ENCODE measurements at regions of chr16 and their contacts with region 1.

Region 1: GRCh38 chr16:9102379-9102778 is 10.9 kb downstream of the HAPSTR1 start:
- DNase-seq: peak; percentile 76
- H3K4me3 ChIP-seq: no peak overlapping the region
- H3K27ac ChIP-seq: no peak overlapping the region
- H3K4me1 ChIP-seq: peaks cover 38% of the 10 kb centered on the region
- H3K27me3 ChIP-seq: no peaks in the 10 kb centered on the region
- CTCF ChIP-seq: no peak

Region 2: GRCh38 chr16:9047686-9048301 is 54.6 kb before region 1 on chr16:
- CTCF ChIA-PET with region 1: no interaction called
- dilution Hi-C with region 1: loop called (anchors 5 kb)
- in situ Hi-C with region 1: no loop called
- intact Hi-C with region 1: no loop called
- DNase-seq: peak; percentile 95
- H3K4me3 ChIP-seq: no peak overlapping the region
- H3K27ac ChIP-seq: peak overlapping the region; percentile 63
- H3K4me1 ChIP-seq: peaks cover 19% of the 10 kb centered on the region
- H3K27me3 ChIP-seq: no peaks in the 10 kb centered on the region
- CTCF ChIP-seq: no peak

Region 3: DNA sequence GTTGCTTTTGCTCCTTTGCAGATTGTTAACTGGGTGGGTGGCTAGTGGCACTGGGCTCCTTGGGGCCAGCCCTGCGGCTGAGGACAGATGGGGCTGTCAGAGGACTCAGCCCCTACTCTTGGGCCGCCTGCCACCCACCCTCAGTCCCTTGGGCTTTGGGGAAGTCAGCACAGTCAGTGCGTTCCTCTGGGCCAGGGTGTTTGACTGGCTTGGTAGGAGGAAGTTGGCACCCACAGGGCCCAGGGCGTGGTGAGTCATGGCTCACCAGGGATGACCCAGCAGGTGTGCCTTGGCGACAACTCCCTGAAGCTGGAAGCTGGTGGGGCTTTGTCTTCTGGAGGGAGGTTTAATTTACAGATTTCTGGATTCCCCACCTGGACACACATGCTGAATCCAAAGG is 21.5 kb after region 1 on chr16:
- CTCF ChIA-PET with region 1: no interaction called
- dilution Hi-C with region 1: no loop called
- in situ Hi-C with region 1: no loop called
- intact Hi-C with region 1: no loop called
- DNase-seq: peak; percentile 52
- H3K4me3 ChIP-seq: no peak overlapping the region
- H3K27ac ChIP-seq: no peak overlapping the region
- H3K4me1 ChIP-seq: peaks cover 39% of the 10 kb centered on the region
- H3K27me3 ChIP-seq: no peaks in the 10 kb centered on the region
- CTCF ChIP-seq: no peak

Region 4: DNA sequence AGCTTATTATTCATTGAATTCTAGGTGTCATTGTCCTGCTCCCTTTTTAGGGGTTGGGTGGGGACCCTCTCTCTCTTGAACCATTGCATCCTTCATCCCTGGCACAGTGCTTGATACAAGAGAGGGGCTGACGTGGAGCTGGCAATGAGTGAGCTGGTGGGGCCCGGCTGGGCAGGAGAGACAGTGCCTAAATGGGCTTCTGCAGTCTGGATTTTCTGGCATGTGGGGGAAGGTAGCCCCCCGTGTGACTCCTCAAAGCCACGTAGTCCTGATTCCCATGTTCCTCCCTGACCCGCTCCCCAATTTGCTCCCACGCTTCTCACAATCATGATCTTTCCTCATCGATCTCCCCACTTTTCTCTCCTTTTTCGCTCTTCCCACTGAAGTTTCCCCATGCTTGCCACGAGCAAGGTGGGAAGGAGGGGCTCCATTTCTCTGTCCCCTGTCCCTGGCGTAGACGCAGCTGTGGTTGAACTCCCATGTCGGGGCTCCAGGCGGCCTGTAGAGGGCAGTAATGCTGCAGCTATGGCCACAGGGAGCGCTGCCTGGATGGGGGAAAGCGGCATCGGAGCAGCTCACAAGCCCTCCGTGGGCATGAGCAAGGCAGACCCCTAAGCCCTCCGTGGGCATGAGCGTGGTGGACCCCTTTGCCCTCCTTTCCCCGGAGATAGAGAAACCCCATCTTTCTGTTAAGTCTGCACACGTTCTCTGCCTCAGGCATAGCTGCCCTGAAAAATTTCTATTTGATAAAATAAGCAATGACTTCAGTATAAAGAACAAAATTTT is 36.5 kb after region 1 on chr16:
- CTCF ChIA-PET with region 1: no interaction called
- dilution Hi-C with region 1: no loop called
- in situ Hi-C with region 1: no loop called
- intact Hi-C with region 1: no loop called
- DNase-seq: no peak
- H3K4me3 ChIP-seq: no peak overlapping the region
- H3K27ac ChIP-seq: no peak overlapping the region
- H3K4me1 ChIP-seq: peaks cover 3% of the 10 kb centered on the region
- H3K27me3 ChIP-seq: no peaks in the 10 kb centered on the region
- CTCF ChIP-seq: peak; percentile 80 to 94

Measured in mammary epithelial cell (primary cell).